GM12878 (cell line): ENCODE measurements at regions of chr2 and their contacts with region 1.

Region 1: GRCh38 chr2:70984576-70985282 is 6.3 kb downstream of the ANKRD53 start:
- DNase-seq: no peak
- ATAC-seq: peak; percentile 99
- H3K4me3 ChIP-seq: no peak overlapping the region
- H3K27ac ChIP-seq: no peak overlapping the region
- H3K4me1 ChIP-seq: no peaks in the 10 kb centered on the region
- H3K27me3 ChIP-seq: no peaks in the 10 kb centered on the region
- CTCF ChIP-seq: peak; percentile 74 to 90 (median 85)
- EP300 ChIP-seq: no peak
- POLR2A ChIP-seq: peak; percentile 47
- RAD21 ChIP-seq: peak; percentile 52

Region 2: DNA sequence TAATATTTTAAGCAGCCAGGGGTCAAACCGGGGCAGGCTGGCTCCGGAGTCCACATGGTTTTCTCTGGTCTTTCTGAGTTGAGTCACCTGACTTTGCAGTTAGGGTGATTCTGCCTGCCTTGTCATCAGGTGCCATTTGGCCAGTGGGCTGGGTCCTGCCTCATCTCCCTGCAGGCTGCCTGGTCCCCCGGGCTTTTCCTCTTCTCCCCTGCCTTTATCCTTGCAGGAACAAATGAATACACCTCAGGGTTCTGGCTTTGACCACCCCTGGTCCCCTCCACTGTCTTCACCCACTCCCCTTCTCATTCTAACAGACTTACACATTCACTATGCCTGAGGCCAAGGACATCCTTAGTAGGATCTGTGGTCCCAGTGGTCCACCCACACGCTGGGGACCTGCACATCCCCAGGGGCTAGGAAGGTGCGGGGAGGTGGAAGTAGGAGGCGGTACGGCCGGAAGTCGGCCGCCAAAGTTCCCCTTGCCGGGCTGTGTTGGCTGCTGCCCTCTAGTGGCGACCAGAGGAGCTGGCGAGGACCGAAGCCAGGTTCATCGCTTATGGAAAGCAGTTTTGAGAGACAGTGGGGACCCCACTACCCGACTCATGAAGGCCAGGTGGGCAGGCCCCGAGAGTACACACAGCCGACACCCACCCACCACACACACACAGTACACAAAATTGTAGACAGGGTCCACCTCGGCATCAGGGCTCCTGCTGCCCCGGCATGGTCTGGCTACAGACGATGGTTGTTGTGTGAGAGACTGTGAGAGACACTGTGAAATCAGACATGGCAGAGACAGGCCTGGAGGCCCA is 16.3 kb after region 1 on chr2:
- CTCF ChIA-PET with region 1: interaction called, 18 read pairs
- POLR2A ChIA-PET with region 1: no interaction called
- RAD21 ChIA-PET with region 1: interaction called, 4 read pairs
- SMC1A ChIA-PET with region 1: interaction called, 11 read pairs
- in situ Hi-C with region 1: no loop called
- intact Hi-C with region 1: no loop called
- DNase-seq: no peak
- ATAC-seq: peak; percentile 98
- H3K4me3 ChIP-seq: peak overlapping the region; percentile 66
- H3K27ac ChIP-seq: peak overlapping the region; percentile 48; the same call in 1 of the 2 replicates
- H3K4me1 ChIP-seq: peaks cover 9% of the 10 kb centered on the region
- H3K27me3 ChIP-seq: no peaks in the 10 kb centered on the region
- CTCF ChIP-seq: peak; percentile 88 to 93 (median 91)
- EP300 ChIP-seq: no peak
- POLR2A ChIP-seq: peak; percentile 60
- RAD21 ChIP-seq: peak; percentile 48